Heart right ventricle (tissue), 16 donors: ENCODE measurements at regions of chr12 and their contacts with region 1.

Region 1: GRCh38 chr12:123713398-123713797 is 1.2 kb downstream of the ATP6V0A2 start:
- DNase-seq: no peak
- ATAC-seq: no peak
- H3K4me3 ChIP-seq: peak overlapping the region in 9 of 10 donors; percentile 70 to 100 (median 94)
- H3K27ac ChIP-seq: peak overlapping the region in 2 of 10 donors; percentile 76 to 89
- H3K4me1 ChIP-seq: peaks cover 4 to 34% (median 23%) of the 10 kb centered on the region in 9 donors
- H3K27me3 ChIP-seq: no peaks in the 10 kb centered on the region
- CTCF ChIP-seq: no peak

Region 2: DNA sequence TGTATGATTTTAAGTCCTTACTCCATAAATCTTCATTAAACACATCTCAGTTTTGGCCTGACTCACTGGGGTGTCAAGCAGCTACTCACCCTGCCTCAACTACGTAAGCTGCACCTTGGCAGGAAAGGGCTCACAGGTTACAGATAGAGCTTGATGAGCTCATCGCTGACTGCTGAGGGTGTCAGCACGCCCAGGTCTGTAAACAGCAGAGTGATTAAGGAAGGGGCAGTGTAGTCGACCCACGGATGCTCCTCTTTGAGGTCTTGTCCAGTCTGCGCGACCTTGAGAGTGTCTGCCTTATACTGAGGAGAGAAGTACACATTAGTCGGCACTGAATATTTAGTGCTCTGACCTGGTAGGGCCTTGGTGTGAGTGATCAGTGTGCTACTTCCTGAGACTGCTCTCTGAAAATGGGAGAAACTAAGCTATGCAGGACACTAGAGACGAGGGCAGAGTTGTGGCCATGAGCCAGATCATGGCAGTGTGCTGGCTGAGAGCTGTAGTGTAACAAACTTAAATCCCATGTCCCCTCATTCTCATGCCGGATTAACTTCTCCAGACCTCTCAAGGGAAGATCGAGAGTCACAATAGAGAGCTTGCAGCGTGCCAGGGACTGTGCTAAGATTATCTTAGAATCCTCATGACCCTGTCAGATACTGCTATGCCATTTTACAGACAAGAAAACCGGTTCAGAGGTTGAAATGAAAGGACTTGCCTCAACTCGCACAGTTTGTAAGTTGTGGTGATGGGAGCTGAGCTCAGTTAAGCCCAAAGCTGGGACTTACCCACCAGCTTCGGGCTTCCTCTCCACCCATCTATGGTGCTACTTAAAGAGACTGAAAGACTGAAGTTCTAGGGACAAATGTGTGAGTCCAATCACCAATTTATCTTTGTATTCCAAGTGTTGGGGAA is 91.5 kb before region 1 on chr12:
- intact Hi-C with region 1: no loop called
- DNase-seq: no peak
- ATAC-seq: peak in 3 of 8 donors; percentile 14 to 33 (median 18)
- H3K4me3 ChIP-seq: no peak overlapping the region
- H3K27ac ChIP-seq: no peak overlapping the region
- H3K4me1 ChIP-seq: peaks cover 0 to 5% (median 0%) of the 10 kb centered on the region in 9 donors
- H3K27me3 ChIP-seq: no peaks in the 10 kb centered on the region
- CTCF ChIP-seq: no peak

Region 3: GRCh38 chr12:123675436-123675835 is 38.0 kb before region 1 on chr12:
- intact Hi-C with region 1: loop called in 1 of 10 experiments (anchors 2 kb)
- DNase-seq: no peak
- ATAC-seq: no peak
- H3K4me3 ChIP-seq: no peak overlapping the region
- H3K27ac ChIP-seq: no peak overlapping the region
- H3K4me1 ChIP-seq: peaks cover 0 to 12% (median 11%) of the 10 kb centered on the region in 9 donors
- H3K27me3 ChIP-seq: no peaks in the 10 kb centered on the region
- CTCF ChIP-seq: no peak

Region 4: GRCh38 chr12:123972457-123973401 is 259.3 kb after region 1 on chr12 and contains the starts of genes CCDC92 and ZNF664:
- intact Hi-C with region 1: loop called in 1 of 10 experiments (anchors 10 kb)
- DNase-seq: peak; percentile 92 to 95
- ATAC-seq: peak; percentile 91 to 96 (median 94)
- H3K4me3 ChIP-seq: peak within 1 kb of the TSS; percentile 73 to 98 (median 94)
- H3K27ac ChIP-seq: peak within 1 kb of the TSS; percentile 92 to 98 (median 94)
- H3K4me1 ChIP-seq: peaks cover 0 to 59% (median 23%) of the 10 kb centered on the region in 9 donors
- H3K27me3 ChIP-seq: no peaks in the 10 kb centered on the region
- CTCF ChIP-seq: peak in 4 of 9 donors; percentile 14 to 34 (median 19)
- total RNA-seq, gene CCDC92: 38.5 to 77.1 (median 56.4) TPM
- total RNA-seq, gene ZNF664: 73.1 to 94.6 (median 77.0) TPM

Region 5: GRCh38 chr12:123983822-123984485 is 270.6 kb after region 1 on chr12:
- intact Hi-C with region 1: loop called in 2 of 10 experiments (anchors 10 kb)
- DNase-seq: peak in 1 of 2 donors; percentile 47
- ATAC-seq: peak; percentile 38 to 89 (median 78)
- H3K4me3 ChIP-seq: no peak overlapping the region
- H3K27ac ChIP-seq: peak overlapping the region in 1 of 10 donors; percentile 17
- H3K4me1 ChIP-seq: peaks cover 10 to 72% (median 32%) of the 10 kb centered on the region in 9 donors
- H3K27me3 ChIP-seq: no peaks in the 10 kb centered on the region
- CTCF ChIP-seq: peak; percentile 34 to 79 (median 64)